Endothelial cell of umbilical vein (primary cell): ENCODE measurements at regions of chr1 and their contacts with region 1.

Region 1: DNA sequence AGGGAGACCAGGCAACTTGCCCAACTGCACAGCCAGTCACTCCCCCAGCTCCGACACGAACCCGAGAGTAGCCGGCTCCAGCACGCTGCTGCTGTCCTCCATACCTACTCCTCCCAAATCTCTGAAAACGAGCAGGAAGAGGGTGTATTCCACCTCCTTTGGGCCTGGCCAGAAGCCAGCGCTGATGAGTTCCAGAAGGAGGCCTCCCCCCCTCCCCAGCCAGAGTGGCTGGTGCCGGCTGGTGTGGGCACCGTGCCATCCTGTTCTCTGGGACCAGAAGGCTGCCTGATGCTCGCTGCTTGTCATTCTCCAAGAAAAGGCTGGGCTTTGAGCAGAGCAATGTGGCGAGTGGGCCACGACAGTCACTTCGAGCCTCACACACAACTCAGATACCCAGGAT is 22.2 kb downstream of the KCNN3 start:
- DNase-seq: no peak
- H3K4me3 ChIP-seq: no peak overlapping the region
- H3K27ac ChIP-seq: no peak overlapping the region
- H3K4me1 ChIP-seq: no peaks in the 10 kb centered on the region
- H3K27me3 ChIP-seq: peaks cover 3 to 8% of the 10 kb centered on the region in 2 experiments
- CTCF ChIP-seq: no peak
- POLR2A ChIP-seq: no peak

Region 2: GRCh38 chr1:154870115-154870571 is 22.3 kb after region 1 on chr1 and contains the start of gene KCNN3:
- CTCF ChIA-PET with region 1: interaction called, 15 read pairs
- POLR2A ChIA-PET with region 1: no interaction called
- dilution Hi-C with region 1: no loop called
- intact Hi-C with region 1: no loop called
- DNase-seq: peak; percentile 93
- H3K4me3 ChIP-seq: peak within 1 kb of the TSS; percentile 13 to 44 (median 41)
- H3K27ac ChIP-seq: no peak within 1 kb of the TSS
- H3K4me1 ChIP-seq: peaks cover 26% of the 10 kb centered on the region
- H3K27me3 ChIP-seq: peaks cover 20 to 24% of the 10 kb centered on the region in 2 experiments
- CTCF ChIP-seq: no peak
- POLR2A ChIP-seq: no peak
- total RNA-seq, gene KCNN3: 0.85 and 1.1 TPM in 2 replicates

Region 3: GRCh38 chr1:155195201-155196102 is 347.6 kb after region 1 on chr1:
- CTCF ChIA-PET with region 1: no interaction called
- POLR2A ChIA-PET with region 1: no interaction called
- dilution Hi-C with region 1: no loop called
- intact Hi-C with region 1: no loop called
- DNase-seq: no peak
- H3K4me3 ChIP-seq: peak overlapping the region; percentile 10 to 32 (median 16)
- H3K27ac ChIP-seq: no peak overlapping the region
- H3K4me1 ChIP-seq: peaks cover 13% of the 10 kb centered on the region
- H3K27me3 ChIP-seq: no peaks in the 10 kb centered on the region
- CTCF ChIP-seq: no peak
- POLR2A ChIP-seq: no peak